CD14-positive monocyte (primary cell): ENCODE measurements at regions of chr18 and their contacts with region 1.

Region 1: DNA sequence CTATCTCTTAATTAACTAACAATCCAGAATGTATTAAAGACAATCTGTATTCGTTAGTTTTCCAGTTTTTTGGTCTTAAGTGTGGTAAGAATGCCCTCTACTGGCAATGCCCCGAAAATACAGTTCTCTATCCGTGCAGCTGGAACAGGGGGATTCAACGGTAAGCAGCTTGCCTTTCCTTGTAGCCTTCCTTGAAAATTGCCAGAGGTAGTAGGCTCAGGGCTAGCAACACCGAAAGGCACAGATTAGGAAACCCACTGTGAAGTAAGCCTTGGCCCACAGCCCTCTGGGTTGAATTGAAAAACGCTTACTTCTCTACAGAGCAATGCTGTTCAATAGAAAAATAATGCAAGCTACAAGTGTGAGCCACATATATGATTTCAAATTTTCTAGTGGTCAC is 17.1 kb upstream of the VPS4B start:
- DNase-seq: peak; percentile 47 to 72 (median 63)
- H3K4me3 ChIP-seq: no peak overlapping the region
- H3K4me3 Mint-ChIP-seq: no peak overlapping the region
- H3K27ac ChIP-seq: no peak overlapping the region
- H3K27ac Mint-ChIP-seq: peak overlapping the region in 4 of 7 donors; percentile 30 to 97 (median 52)
- H3K4me1 ChIP-seq: peaks cover 30 to 32% of the 10 kb centered on the region in 2 donors
- H3K4me1 Mint-ChIP-seq: peaks cover 34% of the 10 kb centered on the region
- H3K27me3 ChIP-seq: no peaks in the 10 kb centered on the region
- H3K27me3 Mint-ChIP-seq: peaks cover 0 to 3% (median 2%) of the 10 kb centered on the region in 3 donors
- CTCF ChIP-seq: peak; percentile 92

Region 2: GRCh38 chr18:63016270-63016669 is 423.1 kb before region 1 on chr18:
- intact Hi-C with region 1: loop called (anchors 5 kb)
- DNase-seq: peak; percentile 22 to 54 (median 50)
- H3K4me3 ChIP-seq: no peak overlapping the region
- H3K4me3 Mint-ChIP-seq: no peak overlapping the region
- H3K27ac ChIP-seq: no peak overlapping the region
- H3K27ac Mint-ChIP-seq: no peak overlapping the region
- H3K4me1 ChIP-seq: no peaks in the 10 kb centered on the region
- H3K4me1 Mint-ChIP-seq: no peaks in the 10 kb centered on the region
- H3K27me3 ChIP-seq: no peaks in the 10 kb centered on the region
- H3K27me3 Mint-ChIP-seq: peaks cover 0 to 3% (median 0%) of the 10 kb centered on the region in 3 donors
- CTCF ChIP-seq: peak; percentile 86

Region 3: GRCh38 chr18:63131106-63131958 is 308.0 kb before region 1 on chr18:
- intact Hi-C with region 1: loop called in 1 of 2 experiments (anchors 10 kb)
- DNase-seq: peak; percentile 38 to 57 (median 43)
- H3K4me3 ChIP-seq: no peak overlapping the region
- H3K4me3 Mint-ChIP-seq: no peak overlapping the region
- H3K27ac ChIP-seq: no peak overlapping the region
- H3K27ac Mint-ChIP-seq: peak overlapping the region in 1 of 7 donors; percentile 71
- H3K4me1 ChIP-seq: no peaks in the 10 kb centered on the region
- H3K4me1 Mint-ChIP-seq: peaks cover 15% of the 10 kb centered on the region
- H3K27me3 ChIP-seq: no peaks in the 10 kb centered on the region
- H3K27me3 Mint-ChIP-seq: peaks cover 0 to 2% (median 0%) of the 10 kb centered on the region in 3 donors
- CTCF ChIP-seq: peak; percentile 78